Activated naive CD8-positive, alpha-beta T cell treated with anti-CD3 and anti-CD28 coated beads, Interleukin-2, amount 10 ng/mL, durations not matched to agents 7 days and 5 days (primary cell): ENCODE measurements at regions of chr22 and their contacts with region 1.

Region 1: GRCh38 chr22:40203572-40203971 is 25.8 kb downstream of the TNRC6B start:
- DNase-seq: no peak
- ATAC-seq: peak; percentile 87
- H3K4me3 Mint-ChIP-seq: peak overlapping the region; percentile 62
- H3K27ac Mint-ChIP-seq: peak overlapping the region; percentile 46
- H3K4me1 Mint-ChIP-seq: peaks cover 37% of the 10 kb centered on the region
- H3K27me3 Mint-ChIP-seq: no peaks in the 10 kb centered on the region

Region 2: DNA sequence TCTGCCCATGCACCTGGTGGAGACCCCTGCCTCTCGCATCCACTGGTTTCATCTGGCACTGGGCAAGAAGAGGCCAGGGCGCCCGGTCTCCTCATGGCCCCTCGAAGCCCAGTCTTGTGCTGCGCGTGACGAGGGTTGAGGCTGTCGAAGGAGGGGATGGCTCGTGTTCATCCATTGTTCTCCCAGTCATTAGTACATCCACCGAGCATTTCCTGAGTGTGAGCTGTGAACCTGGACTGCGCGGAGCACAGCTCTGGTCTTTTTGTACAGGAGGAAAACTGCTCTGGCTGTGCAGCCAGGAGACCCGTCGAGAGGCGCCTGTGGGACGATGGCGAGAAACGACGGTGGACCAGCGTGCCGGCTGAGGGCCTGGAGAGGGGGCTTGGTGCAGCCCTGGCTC is 626.2 kb before region 1 on chr22:
- POLR2A ChIA-PET with region 1: interaction called, 10 read pairs
- DNase-seq: no peak
- ATAC-seq: no peak
- H3K4me3 Mint-ChIP-seq: no peak overlapping the region
- H3K27ac Mint-ChIP-seq: no peak overlapping the region
- H3K4me1 Mint-ChIP-seq: no peaks in the 10 kb centered on the region
- H3K27me3 Mint-ChIP-seq: peaks cover 28% of the 10 kb centered on the region

Region 3: GRCh38 chr22:40190501-40190900 is 13.1 kb before region 1 on chr22:
- POLR2A ChIA-PET with region 1: no interaction called
- DNase-seq: no peak
- ATAC-seq: no peak
- H3K4me3 Mint-ChIP-seq: no peak overlapping the region
- H3K27ac Mint-ChIP-seq: peak overlapping the region; percentile 19
- H3K4me1 Mint-ChIP-seq: peaks cover 35% of the 10 kb centered on the region
- H3K27me3 Mint-ChIP-seq: no peaks in the 10 kb centered on the region

Region 4: DNA sequence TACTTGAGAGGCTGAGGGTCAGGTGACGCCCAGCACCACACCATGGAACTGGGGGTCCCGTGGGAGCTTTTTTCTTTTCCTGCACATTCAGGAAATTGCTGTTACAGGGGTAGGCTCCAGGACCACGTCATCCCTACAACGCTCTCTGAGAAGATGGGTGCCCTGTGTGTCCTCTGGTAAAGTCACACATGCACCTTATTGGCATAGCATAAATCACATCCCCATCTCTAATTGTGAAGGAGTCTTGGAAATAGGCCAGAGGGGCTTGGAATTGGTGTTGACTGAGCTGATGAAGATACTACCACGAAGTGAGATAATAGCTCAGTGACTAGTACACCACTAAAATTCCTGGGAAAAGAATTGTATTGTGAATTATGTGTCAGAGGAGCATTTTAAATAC is 31.7 kb after region 1 on chr22:
- POLR2A ChIA-PET with region 1: no interaction called
- DNase-seq: no peak
- ATAC-seq: no peak
- H3K4me3 Mint-ChIP-seq: no peak overlapping the region
- H3K27ac Mint-ChIP-seq: no peak overlapping the region
- H3K4me1 Mint-ChIP-seq: peaks cover 32% of the 10 kb centered on the region
- H3K27me3 Mint-ChIP-seq: no peaks in the 10 kb centered on the region

Region 5: DNA sequence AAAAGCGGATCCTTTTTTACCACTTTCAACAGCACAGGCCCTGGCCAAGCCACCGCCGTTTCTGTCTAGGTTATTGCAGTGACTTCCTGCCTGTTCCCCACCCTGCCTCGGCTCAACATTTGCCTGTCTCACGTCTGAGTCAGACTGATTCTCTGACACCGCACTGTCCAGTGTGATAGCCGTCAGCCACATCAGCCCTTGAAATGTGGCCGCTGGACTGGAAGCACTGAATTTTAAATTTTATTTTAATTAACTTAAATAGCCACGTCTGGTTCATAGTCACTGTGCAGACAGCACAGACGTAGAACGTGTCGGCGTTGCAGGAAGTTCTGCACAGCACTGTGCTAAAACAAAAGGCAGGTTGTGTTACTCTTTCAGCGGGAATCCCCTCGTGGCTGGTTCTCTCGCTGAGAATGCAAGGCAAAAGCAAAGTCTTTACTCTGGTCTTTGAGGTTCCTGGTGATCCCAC is 86.5 kb after region 1 on chr22:
- POLR2A ChIA-PET with region 1: no interaction called
- DNase-seq: peak; percentile 69
- ATAC-seq: peak; percentile 87
- H3K4me3 Mint-ChIP-seq: peak overlapping the region; percentile 67
- H3K27ac Mint-ChIP-seq: peak overlapping the region; percentile 89
- H3K4me1 Mint-ChIP-seq: peaks cover 21% of the 10 kb centered on the region
- H3K27me3 Mint-ChIP-seq: no peaks in the 10 kb centered on the region